PC-9 (cell line): ENCODE measurements at regions of chr2 and their contacts with region 1.

Region 1: GRCh38 chr2:57479994-57480393 is 566.6 kb upstream of the VRK2 start:
- DNase-seq: no peak
- H3K4me3 ChIP-seq: no peak overlapping the region
- H3K27ac ChIP-seq: no peak overlapping the region
- H3K4me1 ChIP-seq: no peaks in the 10 kb centered on the region
- H3K27me3 ChIP-seq: no peaks in the 10 kb centered on the region
- CTCF ChIP-seq: no peak

Region 2: DNA sequence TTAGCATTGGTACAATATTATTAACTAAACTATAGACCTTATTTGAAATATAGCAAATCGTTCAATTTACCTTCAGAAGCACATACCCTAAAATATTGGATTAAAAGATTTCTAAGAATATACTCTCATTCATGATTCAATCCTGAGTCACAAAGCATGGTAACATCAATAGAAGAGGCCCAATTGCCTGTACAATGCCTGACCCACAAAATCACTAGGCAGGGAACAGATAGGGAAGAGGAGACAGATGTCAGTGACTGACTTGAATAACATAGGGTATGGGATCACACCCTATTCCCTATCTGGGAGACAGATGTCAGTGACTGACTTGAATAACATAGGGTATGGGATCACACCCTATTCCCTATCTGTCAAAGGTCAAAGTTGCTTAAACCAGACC is 45.0 kb before region 1 on chr2:
- CTCF ChIA-PET with region 1: no interaction called
- POLR2A ChIA-PET with region 1: interaction called, 10 read pairs
- intact Hi-C with region 1: no loop called
- DNase-seq: no peak
- H3K4me3 ChIP-seq: no peak overlapping the region
- H3K27ac ChIP-seq: no peak overlapping the region
- H3K4me1 ChIP-seq: no peaks in the 10 kb centered on the region
- H3K27me3 ChIP-seq: no peaks in the 10 kb centered on the region
- CTCF ChIP-seq: no peak

Region 3: GRCh38 chr2:57510704-57511103 is 30.7 kb after region 1 on chr2:
- CTCF ChIA-PET with region 1: no interaction called
- POLR2A ChIA-PET with region 1: no interaction called
- intact Hi-C with region 1: no loop called
- DNase-seq: no peak
- H3K4me3 ChIP-seq: no peak overlapping the region
- H3K27ac ChIP-seq: no peak overlapping the region
- H3K4me1 ChIP-seq: no peaks in the 10 kb centered on the region
- H3K27me3 ChIP-seq: no peaks in the 10 kb centered on the region
- CTCF ChIP-seq: peak; percentile 22; the same call in 1 of the 2 replicates

Region 4: DNA sequence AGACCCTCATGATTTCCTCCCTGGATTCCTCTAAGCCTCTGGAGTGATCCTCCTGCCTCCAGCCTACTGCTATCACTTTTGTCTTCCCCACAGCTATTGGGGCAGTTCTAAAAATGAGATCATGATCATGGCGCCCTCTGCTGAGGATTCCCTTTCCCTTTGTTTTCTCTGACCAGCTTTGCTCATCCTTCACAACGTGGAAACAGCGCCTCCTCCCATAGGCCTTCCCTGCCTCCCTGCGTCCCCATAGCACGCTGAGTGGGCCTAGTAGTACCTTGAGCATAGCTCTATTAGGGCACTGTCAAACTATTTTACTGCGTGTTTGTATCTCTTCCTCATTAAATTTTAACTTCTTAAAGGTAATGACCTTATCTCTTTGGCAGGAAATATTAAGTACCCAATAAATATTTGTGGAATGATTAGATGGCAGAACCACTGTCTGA is 968.1 kb after region 1 on chr2:
- CTCF ChIA-PET with region 1: no interaction called
- POLR2A ChIA-PET with region 1: no interaction called
- intact Hi-C with region 1: no loop called
- DNase-seq: peak in 1 of 2 experiments; percentile 64
- H3K4me3 ChIP-seq: no peak overlapping the region
- H3K27ac ChIP-seq: no peak overlapping the region
- H3K4me1 ChIP-seq: no peaks in the 10 kb centered on the region
- H3K27me3 ChIP-seq: no peaks in the 10 kb centered on the region
- CTCF ChIP-seq: peak; percentile 70